ENCODE measurements at regions of chr18 and their contacts with region 1.

Region 1: DNA sequence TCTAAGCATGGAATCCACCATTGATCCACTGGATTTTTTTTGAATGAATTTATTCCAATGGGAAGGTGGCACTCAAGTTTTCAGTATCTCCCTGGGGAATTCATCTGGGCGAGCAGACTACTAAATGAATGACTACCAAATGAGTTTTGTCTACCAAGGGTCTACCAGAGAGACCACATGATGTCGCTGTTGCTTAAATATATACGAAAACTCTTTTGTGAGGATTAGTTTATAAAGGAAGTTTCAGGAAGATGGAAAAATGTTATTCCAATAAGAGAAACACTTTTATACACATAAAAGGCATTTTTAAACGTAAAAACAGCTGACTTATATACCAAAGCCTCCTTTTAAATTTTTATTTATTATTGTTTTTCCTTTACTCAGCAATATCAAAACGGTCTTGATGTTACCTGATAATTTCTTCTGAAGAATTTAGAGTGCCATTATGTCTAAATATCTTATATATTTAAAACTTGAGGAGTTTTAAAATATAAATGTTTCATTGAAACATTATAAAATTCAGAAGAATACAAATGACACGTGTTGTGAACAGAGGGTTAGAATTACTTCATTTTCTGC is 139.7 kb downstream of the HRH4 start:
- DNase-seq: no peak
- ATAC-seq: no peak
- H3K4me3 ChIP-seq: no peak overlapping the region
- H3K27ac ChIP-seq: no peak overlapping the region
- H3K4me1 ChIP-seq: no peaks in the 10 kb centered on the region
- H3K27me3 ChIP-seq: peaks cover 0 to 5% (median 0%) of the 10 kb centered on the region in 3 donors
- CTCF ChIP-seq: peak; percentile 57

Region 2: DNA sequence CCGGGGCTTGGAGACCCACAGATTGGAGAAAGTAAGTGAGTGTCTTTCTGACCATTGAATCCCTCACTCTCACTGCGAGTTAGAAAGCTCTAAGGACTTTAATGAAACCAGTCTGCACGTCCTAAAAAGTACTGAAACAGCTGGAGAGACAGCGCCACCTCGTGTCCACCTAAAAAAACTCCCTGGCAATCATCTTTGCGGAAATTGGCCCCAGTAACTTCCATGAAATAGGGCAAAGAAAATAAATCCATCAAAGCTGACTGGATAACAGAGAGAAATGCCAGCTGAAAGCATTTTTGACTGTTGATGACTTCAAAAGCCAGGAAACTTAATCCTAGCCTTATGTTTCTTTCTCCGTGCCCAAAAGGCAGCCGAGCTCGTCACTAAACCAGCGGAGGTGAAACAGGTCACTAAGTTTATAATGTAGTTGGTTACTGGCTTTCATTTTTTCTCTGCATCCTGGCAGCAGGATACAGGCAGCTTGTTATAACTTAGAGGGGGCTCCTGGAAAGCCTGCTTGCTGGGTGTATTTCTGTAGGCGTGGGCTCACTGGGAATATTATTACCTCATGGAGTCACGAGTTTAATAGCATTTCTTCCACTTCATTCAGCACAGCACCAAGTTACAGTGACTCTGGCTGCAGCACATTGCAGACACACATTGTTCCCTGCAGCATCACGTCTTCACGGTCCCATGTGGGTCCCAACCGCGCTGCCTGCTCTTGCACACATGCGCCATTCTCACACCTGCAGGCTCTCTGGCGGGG is 126.7 kb after region 1 on chr18:
- intact Hi-C with region 1: loop called (anchors 1 to 5 kb)
- DNase-seq: peak; percentile 59 to 74
- ATAC-seq: peak; percentile 42 to 84 (median 54)
- H3K4me3 ChIP-seq: peak overlapping the region; percentile 60
- H3K27ac ChIP-seq: no peak overlapping the region
- H3K4me1 ChIP-seq: peaks cover 13% of the 10 kb centered on the region
- H3K27me3 ChIP-seq: peaks cover 0 to 12% (median 0%) of the 10 kb centered on the region in 3 donors
- CTCF ChIP-seq: peak; percentile 79

Region 3: GRCh38 chr18:25896178-25896780 is 1296.1 kb after region 1 on chr18:
- intact Hi-C with region 1: loop called in 1 of 2 experiments (anchors 10 kb)
- DNase-seq: no peak
- ATAC-seq: peak; percentile 57 to 78 (median 62)
- H3K4me3 ChIP-seq: no peak overlapping the region
- H3K27ac ChIP-seq: no peak overlapping the region
- H3K4me1 ChIP-seq: no peaks in the 10 kb centered on the region
- H3K27me3 ChIP-seq: no peaks in the 10 kb centered on the region
- CTCF ChIP-seq: peak; percentile 83

Measured in psoas muscle (tissue), 8 donors.